GM12878 (cell line): ENCODE measurements at regions of chr14 and their contacts with region 1.

Region 1: DNA sequence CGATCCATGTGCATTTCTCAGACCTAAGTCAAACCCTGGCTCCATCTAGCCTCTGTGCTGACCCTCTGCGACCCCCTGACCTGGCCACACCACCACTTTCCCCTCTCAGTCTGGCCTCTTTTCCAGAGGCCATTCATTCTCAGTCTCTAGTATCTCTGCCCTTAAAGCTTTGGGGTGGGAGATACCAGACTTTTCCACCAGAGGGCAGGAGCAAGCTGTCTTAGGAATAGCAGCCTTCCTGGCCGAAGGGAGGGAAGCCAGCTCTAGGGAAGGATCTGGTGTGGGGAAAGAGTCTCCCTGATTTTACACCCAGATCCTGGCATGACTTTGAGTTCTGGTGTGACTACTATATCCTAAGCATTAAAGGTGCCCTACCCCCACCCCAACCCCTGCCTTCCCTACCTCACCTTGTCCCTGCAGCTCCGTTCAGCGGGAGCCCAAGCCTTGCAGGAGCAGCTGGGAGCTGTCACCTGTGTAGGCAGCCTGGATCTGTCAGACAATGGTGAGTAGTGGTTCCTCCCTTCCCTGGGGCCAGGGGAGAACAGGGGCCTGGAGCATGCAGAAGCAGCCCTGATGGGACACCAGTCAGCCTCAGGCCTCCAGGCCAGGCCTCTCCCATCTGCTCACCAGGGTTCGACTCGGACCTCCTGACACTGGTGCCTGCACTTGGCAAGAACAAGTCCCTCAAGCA is 6.6 kb downstream of the CARMIL3 start:
- DNase-seq: no peak
- ATAC-seq: peak; percentile 86
- H3K4me3 ChIP-seq: no peak overlapping the region
- H3K27ac ChIP-seq: no peak overlapping the region
- H3K4me1 ChIP-seq: no peaks in the 10 kb centered on the region
- H3K27me3 ChIP-seq: no peaks in the 10 kb centered on the region; a peak in 1 of 4 replicates
- CTCF ChIP-seq: peak; percentile 66 to 85 (median 80)
- EP300 ChIP-seq: no peak
- POLR2A ChIP-seq: no peak
- RAD21 ChIP-seq: peak; percentile 94

Region 2: GRCh38 chr14:23793532-23793931 is 264.9 kb before region 1 on chr14:
- CTCF ChIA-PET with region 1: no interaction called
- POLR2A ChIA-PET with region 1: no interaction called
- RAD21 ChIA-PET with region 1: no interaction called
- SMC1A ChIA-PET with region 1: no interaction called
- in situ Hi-C with region 1: no loop called
- intact Hi-C with region 1: no loop called
- DNase-seq: no peak
- ATAC-seq: no peak
- H3K4me3 ChIP-seq: no peak overlapping the region
- H3K27ac ChIP-seq: no peak overlapping the region
- H3K4me1 ChIP-seq: no peaks in the 10 kb centered on the region
- H3K27me3 ChIP-seq: no peaks in the 10 kb centered on the region; a peak in 2 of 4 replicates
- CTCF ChIP-seq: no peak
- EP300 ChIP-seq: no peak
- POLR2A ChIP-seq: no peak
- RAD21 ChIP-seq: no peak

Region 3: GRCh38 chr14:24070285-24071143 is 12.1 kb after region 1 on chr14:
- CTCF ChIA-PET with region 1: interaction called, 10 read pairs
- POLR2A ChIA-PET with region 1: no interaction called
- RAD21 ChIA-PET with region 1: interaction called, 3 read pairs
- SMC1A ChIA-PET with region 1: interaction called, 10 read pairs
- in situ Hi-C with region 1: no loop called
- intact Hi-C with region 1: no loop called
- DNase-seq: no peak
- ATAC-seq: no peak
- H3K4me3 ChIP-seq: no peak overlapping the region
- H3K27ac ChIP-seq: no peak overlapping the region
- H3K4me1 ChIP-seq: peaks cover 8% of the 10 kb centered on the region
- H3K27me3 ChIP-seq: peaks cover 0 to 2% of the 10 kb centered on the region in 2 experiments; a peak in 1 of 4 replicates
- CTCF ChIP-seq: no peak
- EP300 ChIP-seq: no peak
- POLR2A ChIP-seq: no peak
- RAD21 ChIP-seq: no peak

Region 4: DNA sequence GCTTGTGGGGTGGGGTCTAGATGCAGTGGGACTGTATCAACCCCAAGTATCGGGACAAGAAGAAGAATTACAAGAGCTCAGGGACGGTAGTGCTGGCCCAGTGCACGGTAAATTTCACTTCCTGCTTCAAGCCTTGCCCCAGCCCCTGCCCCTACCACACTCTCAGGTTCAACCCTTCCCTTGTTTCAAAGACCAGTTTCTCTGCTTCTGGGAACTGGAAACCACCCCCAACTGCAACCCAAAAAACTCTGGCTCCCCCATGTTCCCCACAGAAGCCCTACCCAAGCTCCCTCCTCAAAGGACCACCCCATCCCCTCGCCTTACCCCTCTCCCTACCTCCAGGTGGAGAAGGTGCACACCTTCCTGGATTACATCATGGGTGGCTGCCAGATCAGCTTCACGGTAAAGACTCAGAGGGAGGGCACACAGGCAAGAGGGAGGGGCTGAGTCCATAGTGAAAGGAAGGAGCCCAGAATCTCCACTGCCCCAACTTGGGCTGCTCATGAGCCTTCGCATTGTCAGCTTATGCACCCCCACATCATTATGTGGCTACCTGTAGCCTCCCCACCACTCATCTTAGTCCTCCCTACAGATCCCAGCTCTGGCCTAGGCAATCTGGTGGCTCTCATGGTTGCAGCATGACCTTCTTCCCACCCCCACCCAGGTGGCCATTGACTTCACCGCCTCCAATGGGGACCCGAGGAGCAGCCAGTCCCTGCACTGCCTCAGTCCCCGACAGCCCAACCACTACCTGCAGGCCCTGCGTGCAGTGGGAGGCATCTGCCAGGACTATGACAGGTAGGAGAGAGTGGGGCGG is 17.3 kb after region 1 on chr14:
- CTCF ChIA-PET with region 1: interaction called, 37 read pairs
- POLR2A ChIA-PET with region 1: interaction called, 6 read pairs
- RAD21 ChIA-PET with region 1: interaction called, 25 read pairs
- SMC1A ChIA-PET with region 1: interaction called, 10 read pairs
- in situ Hi-C with region 1: no loop called
- intact Hi-C with region 1: no loop called
- DNase-seq: no peak
- ATAC-seq: peak; percentile 85
- H3K4me3 ChIP-seq: 0 out of 2 replicates have a peak overlapping the region, but pooled peaks have one; percentile 6
- H3K27ac ChIP-seq: 0 out of 2 replicates have a peak overlapping the region, but pooled peaks have one; percentile 9
- H3K4me1 ChIP-seq: peaks cover 24% of the 10 kb centered on the region
- H3K27me3 ChIP-seq: no peaks in the 10 kb centered on the region
- CTCF ChIP-seq: no peak
- EP300 ChIP-seq: no peak
- POLR2A ChIP-seq: no peak
- RAD21 ChIP-seq: no peak

Region 5: DNA sequence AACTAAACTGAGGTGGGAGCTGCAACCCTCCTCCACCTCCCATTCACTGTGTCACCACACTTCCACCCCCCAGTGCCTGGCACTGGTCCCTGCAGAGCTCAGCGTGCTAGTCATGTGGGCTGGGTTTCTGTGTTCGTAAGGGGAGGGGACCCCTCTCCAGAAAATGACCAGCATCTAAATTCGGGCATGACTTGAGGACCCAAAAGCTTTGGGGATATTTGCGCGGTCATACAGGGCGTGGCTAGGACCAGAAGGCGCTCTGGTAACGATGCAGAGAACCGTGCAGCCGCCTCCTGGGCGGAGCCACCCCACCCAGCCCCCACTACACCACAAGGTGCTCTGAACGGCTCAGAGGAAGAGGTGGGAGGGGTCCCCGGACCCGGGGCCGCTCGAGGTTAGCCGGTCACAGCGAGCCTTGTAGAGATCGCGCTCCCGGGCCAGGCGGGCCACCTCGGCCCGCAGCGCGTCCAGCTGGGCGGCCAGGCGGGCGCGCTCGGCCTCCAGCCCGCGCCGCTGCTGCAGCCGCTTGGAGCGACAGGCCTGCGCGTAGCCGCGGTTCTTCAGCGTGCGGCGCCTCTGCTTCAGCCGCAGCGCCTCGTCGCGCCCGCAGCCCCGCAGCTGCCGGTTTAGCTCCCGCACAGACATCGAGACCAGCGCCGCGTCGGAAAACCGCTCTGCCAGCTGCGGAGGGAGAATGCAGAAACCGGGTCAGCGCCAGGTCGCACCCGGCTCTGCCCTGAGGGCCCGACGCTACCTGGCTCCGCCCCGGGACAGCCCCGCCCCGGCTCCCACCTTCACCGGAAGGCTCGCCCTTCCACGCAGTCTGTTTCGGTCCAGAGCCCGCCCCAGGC is 22.7 kb after region 1 on chr14:
- CTCF ChIA-PET with region 1: interaction called, 37 read pairs
- POLR2A ChIA-PET with region 1: interaction called, 6 read pairs
- RAD21 ChIA-PET with region 1: interaction called, 25 read pairs
- SMC1A ChIA-PET with region 1: interaction called, 9 read pairs
- in situ Hi-C with region 1: no loop called
- intact Hi-C with region 1: no loop called
- DNase-seq: no peak
- ATAC-seq: peak; percentile 95
- H3K4me3 ChIP-seq: peak overlapping the region; percentile 63; the same call in 1 of the 2 replicates
- H3K27ac ChIP-seq: peak overlapping the region; percentile 67
- H3K4me1 ChIP-seq: peaks cover 14% of the 10 kb centered on the region
- H3K27me3 ChIP-seq: no peaks in the 10 kb centered on the region
- CTCF ChIP-seq: no peak
- EP300 ChIP-seq: no peak
- POLR2A ChIP-seq: peak; percentile 77
- RAD21 ChIP-seq: no peak

Region 6: DNA sequence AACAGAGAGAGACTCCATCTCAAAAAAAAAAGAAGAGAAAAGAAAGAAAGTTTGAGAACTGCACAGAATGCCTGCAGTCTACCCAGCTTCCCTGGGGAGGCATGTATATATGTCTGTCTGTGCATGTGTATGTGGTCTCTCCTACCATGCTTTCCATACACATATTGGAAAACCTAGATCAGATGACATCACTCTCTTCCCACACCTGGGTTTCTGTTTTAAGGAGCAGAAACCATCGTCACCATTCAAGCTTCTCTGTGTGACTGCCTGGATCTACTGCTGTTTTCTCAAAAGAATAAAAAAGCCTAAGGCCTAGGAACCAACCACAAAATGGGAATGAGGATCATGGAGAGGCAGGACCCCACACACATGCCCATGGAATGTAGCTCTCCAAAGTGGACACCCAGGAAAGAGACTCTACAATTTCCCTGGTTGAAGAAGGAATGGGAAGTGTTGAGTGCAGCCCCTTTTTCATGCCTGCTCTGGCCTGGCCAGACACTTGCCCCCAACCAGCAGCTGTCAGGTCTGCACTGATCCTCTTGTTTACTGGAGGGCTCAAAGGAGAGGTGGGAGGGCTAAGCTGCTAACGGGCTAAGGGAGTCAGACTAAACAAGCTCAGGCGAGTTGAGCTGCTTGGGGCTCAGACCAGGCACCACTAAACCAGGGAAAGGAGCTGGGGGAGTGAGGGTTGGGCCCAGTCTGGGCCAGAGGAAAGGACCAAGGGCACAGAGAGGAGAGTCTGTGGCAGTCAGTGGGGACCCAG is 28.0 kb after region 1 on chr14:
- CTCF ChIA-PET with region 1: interaction called, 197 read pairs
- POLR2A ChIA-PET with region 1: interaction called, 6 read pairs
- RAD21 ChIA-PET with region 1: interaction called, 140 read pairs
- SMC1A ChIA-PET with region 1: interaction called, 78 read pairs
- in situ Hi-C with region 1: loop called (anchors 5 kb)
- intact Hi-C with region 1: loop called (anchors 1 kb)
- DNase-seq: no peak
- ATAC-seq: no peak
- H3K4me3 ChIP-seq: no peak overlapping the region
- H3K27ac ChIP-seq: no peak overlapping the region
- H3K4me1 ChIP-seq: 0 out of 2 replicates have a peak, but pooled peaks cover 3% of the 10 kb centered on the region
- H3K27me3 ChIP-seq: no peaks in the 10 kb centered on the region
- CTCF ChIP-seq: no peak
- EP300 ChIP-seq: no peak
- POLR2A ChIP-seq: no peak
- RAD21 ChIP-seq: no peak

Region 7: DNA sequence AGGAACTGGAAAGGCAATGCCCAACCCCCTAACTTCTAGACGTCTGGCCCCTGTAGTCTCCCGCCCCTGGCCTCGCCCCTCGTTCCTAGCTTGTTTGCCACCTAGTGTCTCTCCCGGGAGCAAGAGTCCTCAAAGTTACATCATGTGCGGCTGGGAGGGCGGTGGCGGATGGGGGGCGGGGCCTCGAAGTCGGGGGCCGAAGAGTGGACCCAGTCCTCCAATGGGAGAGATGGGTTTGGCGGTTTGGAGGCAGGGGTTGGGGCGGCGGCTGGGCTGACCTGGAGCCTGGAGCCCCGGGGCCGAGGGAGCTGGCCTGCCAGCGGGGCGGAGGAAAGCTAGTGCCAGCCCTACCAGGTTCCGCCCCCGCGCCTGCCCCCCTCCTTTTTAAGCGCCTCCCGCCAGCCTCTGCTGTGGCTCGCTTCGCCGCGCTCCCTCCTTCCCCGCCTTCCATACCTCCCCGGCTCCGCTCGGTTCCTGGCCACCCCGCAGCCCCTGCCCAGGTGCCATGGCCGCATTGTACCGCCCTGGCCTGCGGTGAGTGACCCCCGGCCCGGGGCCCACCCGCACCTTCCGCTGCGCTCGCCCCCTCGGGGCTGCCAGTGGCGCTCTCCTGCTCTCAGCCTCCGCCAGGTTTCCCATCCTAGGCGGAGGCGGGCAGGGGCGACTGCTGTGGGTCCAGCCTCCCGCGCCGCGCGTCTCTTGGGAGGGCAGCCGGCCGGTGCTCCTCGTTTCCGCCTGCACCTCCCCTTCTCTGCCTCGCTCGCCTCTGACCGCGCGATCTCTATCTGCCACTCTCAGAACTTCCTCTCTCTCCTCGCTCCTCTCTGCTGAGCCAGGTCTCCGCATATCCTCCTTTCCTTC is 35.7 kb after region 1 on chr14 and contains the start of gene PCK2:
- CTCF ChIA-PET with region 1: interaction called, 197 read pairs
- POLR2A ChIA-PET with region 1: interaction called, 18 read pairs
- RAD21 ChIA-PET with region 1: interaction called, 140 read pairs
- SMC1A ChIA-PET with region 1: interaction called, 78 read pairs
- in situ Hi-C with region 1: loop called (anchors 5 kb)
- intact Hi-C with region 1: loop called (anchors 1 kb)
- DNase-seq: no peak
- ATAC-seq: peak; percentile 79
- H3K4me3 ChIP-seq: peak within 1 kb of the TSS; percentile 98
- H3K27ac ChIP-seq: peak within 1 kb of the TSS; percentile 99
- H3K4me1 ChIP-seq: 0 out of 2 replicates have a peak, but pooled peaks cover 3% of the 10 kb centered on the region
- H3K27me3 ChIP-seq: no peaks in the 10 kb centered on the region
- CTCF ChIP-seq: no peak
- EP300 ChIP-seq: no peak
- POLR2A ChIP-seq: peak; percentile 91
- RAD21 ChIP-seq: no peak
- polyA plus RNA-seq, gene PCK2: 6.6 to 12.3 TPM

Region 8: GRCh38 chr14:24179961-24180796 is 121.8 kb after region 1 on chr14:
- CTCF ChIA-PET with region 1: no interaction called
- POLR2A ChIA-PET with region 1: no interaction called
- RAD21 ChIA-PET with region 1: no interaction called
- SMC1A ChIA-PET with region 1: no interaction called
- in situ Hi-C with region 1: no loop called
- intact Hi-C with region 1: no loop called
- DNase-seq: no peak
- ATAC-seq: peak; percentile 52
- H3K4me3 ChIP-seq: no peak overlapping the region
- H3K27ac ChIP-seq: no peak overlapping the region
- H3K4me1 ChIP-seq: no peaks in the 10 kb centered on the region
- H3K27me3 ChIP-seq: no peaks in the 10 kb centered on the region
- CTCF ChIP-seq: no peak
- EP300 ChIP-seq: no peak
- POLR2A ChIP-seq: peak; percentile 62
- RAD21 ChIP-seq: no peak